K562 (cell line): ENCODE measurements at regions of chr20 and their contacts with region 1.

Region 1: DNA sequence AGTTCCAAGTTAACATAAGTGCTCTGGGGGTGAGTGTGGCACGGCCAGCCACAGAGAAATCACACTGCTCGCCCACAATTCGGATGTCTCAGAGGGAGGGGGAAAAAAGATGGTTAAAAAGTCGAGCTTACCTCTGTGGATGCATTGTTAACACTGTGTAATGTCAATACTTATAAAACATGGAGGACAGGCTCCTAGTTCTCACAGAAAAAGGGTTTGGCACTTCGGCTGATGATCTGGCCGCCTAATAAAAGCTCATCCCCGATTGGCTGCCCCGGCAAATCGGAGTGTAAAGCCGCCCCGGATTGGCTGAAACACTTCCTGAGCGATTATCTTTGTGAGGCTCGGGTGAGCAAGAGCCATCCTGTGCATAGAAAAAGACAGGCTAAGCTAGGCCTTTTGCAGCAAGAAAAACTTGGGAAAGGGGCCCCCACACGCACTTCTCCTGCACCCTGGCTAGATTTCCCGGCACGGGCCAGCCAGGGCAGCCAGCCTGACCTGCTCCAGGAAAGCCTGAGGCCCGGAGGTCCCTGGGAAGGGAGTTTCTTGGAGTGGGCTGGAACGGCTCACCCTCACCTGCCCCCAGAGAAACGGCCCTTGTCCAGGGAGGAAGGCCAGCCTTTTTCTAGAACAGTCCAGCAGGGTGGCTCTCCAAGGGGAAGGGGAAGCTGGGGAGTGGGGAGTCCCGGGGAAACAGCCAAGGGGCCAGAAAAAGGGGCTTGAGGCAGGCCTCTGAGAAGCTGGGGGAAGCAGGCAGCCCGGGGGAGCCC is at the start of gene ZMYND8:
- DNase-seq: peak; percentile 95 to 98 (median 96)
- ATAC-seq: peak; percentile 28
- H3K4me3 ChIP-seq: peak within 1 kb of the TSS; percentile 65
- H3K27ac ChIP-seq: peak within 1 kb of the TSS; percentile 97
- H3K4me1 ChIP-seq: peaks cover 43 to 46% of the 10 kb centered on the region in 2 experiments
- H3K27me3 ChIP-seq: no peaks in the 10 kb centered on the region
- CTCF ChIP-seq: no peak; a peak in 2 of 6 replicates
- EP300 ChIP-seq: peak; percentile 36; the same call in 1 of the 2 replicates
- POLR2A ChIP-seq: peak; percentile 81
- RAD21 ChIP-seq: no peak
- polyA plus RNA-seq, gene ZMYND8: 31.8 to 58.0 TPM

Region 2: DNA sequence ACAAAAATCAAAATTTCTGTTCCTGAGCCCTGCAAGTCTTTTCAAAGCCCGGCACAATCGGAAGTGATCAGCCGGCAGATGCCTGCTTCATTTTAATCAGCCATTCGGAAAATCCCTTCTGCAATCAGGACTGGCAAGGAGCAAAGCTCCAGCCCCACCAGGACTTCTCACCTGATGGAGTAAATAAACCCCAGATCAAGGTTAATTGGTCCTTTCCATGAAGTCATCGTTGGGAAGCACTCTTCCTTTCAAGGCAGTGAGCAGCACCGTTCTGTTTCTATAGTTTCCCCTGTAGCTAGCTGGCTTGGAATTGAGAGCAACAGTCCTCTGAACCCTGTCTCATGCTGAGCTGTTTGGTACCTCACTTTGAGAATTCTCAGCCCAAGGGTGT is 185.8 kb before region 1 on chr20:
- CTCF ChIA-PET with region 1: no interaction called
- POLR2A ChIA-PET with region 1: no interaction called
- in situ Hi-C with region 1: no loop called
- intact Hi-C with region 1: no loop called
- DNase-seq: no peak
- ATAC-seq: no peak
- H3K4me3 ChIP-seq: no peak overlapping the region
- H3K27ac ChIP-seq: no peak overlapping the region
- H3K4me1 ChIP-seq: peaks cover 0 to 9% of the 10 kb centered on the region in 2 experiments; a peak in 1 of 5 replicates
- H3K27me3 ChIP-seq: peaks cover 47 to 72% of the 10 kb centered on the region in 2 experiments; a peak in 4 of 5 replicates
- CTCF ChIP-seq: no peak
- EP300 ChIP-seq: no peak
- POLR2A ChIP-seq: no peak
- RAD21 ChIP-seq: no peak

Region 3: GRCh38 chr20:47317127-47317895 is 39.4 kb before region 1 on chr20:
- CTCF ChIA-PET with region 1: no interaction called
- POLR2A ChIA-PET with region 1: interaction called, 8 read pairs
- in situ Hi-C with region 1: no loop called
- intact Hi-C with region 1: loop called (anchors 5 kb)
- DNase-seq: peak; percentile 75 to 96 (median 82)
- ATAC-seq: peak; percentile 70
- H3K4me3 ChIP-seq: no peak overlapping the region
- H3K27ac ChIP-seq: peak overlapping the region; percentile 89
- H3K4me1 ChIP-seq: peaks cover 60 to 66% of the 10 kb centered on the region in 2 experiments
- H3K27me3 ChIP-seq: no peaks in the 10 kb centered on the region
- CTCF ChIP-seq: no peak
- EP300 ChIP-seq: peak; percentile 83; the same call in 1 of the 2 replicates
- POLR2A ChIP-seq: peak; percentile 56
- RAD21 ChIP-seq: no peak

Region 4: DNA sequence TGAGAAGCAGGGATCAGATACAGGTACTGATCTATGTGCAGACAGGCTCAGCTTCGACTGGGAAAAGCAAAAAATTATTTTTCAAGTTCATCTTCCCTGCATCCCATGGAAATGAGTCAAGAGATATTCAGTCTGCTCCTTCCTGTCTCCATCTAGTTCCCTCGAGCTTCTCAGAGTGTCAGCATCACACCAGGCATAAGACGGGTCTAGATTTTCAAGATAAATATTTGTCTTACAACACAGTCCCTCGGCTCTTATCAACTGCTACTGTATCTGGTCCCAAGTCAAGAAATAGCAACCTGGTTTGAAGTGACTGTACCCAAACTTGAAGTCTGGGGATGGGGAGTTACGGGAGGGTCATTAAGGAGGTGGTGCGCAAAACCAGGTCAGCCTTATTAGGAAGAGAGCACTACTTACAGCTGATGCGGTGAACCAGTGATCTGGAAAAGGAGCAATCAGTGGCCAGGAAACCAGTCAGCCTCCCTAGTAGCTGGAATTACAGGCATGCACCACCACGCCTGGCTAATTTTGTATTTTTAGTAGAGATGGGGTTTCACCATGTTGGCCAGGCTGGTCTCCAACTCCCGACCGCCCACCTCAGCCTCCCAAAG is 29.9 kb before region 1 on chr20:
- CTCF ChIA-PET with region 1: no interaction called
- POLR2A ChIA-PET with region 1: interaction called, 10 read pairs
- in situ Hi-C with region 1: no loop called
- intact Hi-C with region 1: loop called (anchors 2 kb)
- DNase-seq: peak in 1 of 4 experiments; percentile 36
- ATAC-seq: no peak
- H3K4me3 ChIP-seq: no peak overlapping the region
- H3K27ac ChIP-seq: peak overlapping the region; percentile 42; the same call in 2 of the 3 replicates
- H3K4me1 ChIP-seq: peaks cover 52 to 59% of the 10 kb centered on the region in 2 experiments
- H3K27me3 ChIP-seq: no peaks in the 10 kb centered on the region
- CTCF ChIP-seq: no peak
- EP300 ChIP-seq: no peak
- POLR2A ChIP-seq: no peak
- RAD21 ChIP-seq: peak in 1 of 2 experiments; percentile 26; a peak in 2 of 4 replicates

Region 5: DNA sequence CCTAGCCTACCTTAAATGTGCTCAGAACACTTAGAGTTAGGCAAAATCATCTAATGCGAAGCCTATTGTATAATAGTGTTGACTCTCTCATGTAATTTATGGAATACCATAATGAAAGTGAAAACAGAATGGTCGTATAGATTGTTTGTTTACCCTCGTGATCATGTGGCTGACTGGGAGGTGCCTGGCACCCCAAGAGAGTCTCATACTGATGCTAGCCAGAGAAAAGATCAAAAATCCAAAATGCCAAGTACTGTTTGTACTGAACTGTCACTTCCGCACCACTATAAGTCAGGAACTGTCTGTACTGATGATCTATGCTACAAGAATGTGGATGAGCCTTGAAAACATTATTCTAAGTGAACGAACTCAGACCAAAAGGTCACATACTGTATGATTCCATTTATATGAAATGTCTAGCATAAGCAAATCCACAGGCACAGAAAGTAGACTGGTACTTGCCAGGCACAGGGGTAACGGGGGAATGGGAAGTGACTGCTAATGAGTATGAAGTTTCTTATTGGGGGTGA is 22.6 kb before region 1 on chr20:
- CTCF ChIA-PET with region 1: no interaction called
- POLR2A ChIA-PET with region 1: interaction called, 56 read pairs
- in situ Hi-C with region 1: no loop called
- intact Hi-C with region 1: loop called (anchors 2 kb)
- DNase-seq: no peak
- ATAC-seq: no peak
- H3K4me3 ChIP-seq: no peak overlapping the region
- H3K27ac ChIP-seq: peak overlapping the region; percentile 47; the same call in 2 of the 3 replicates
- H3K4me1 ChIP-seq: peaks cover 53 to 73% of the 10 kb centered on the region in 2 experiments
- H3K27me3 ChIP-seq: no peaks in the 10 kb centered on the region
- CTCF ChIP-seq: no peak
- EP300 ChIP-seq: no peak
- POLR2A ChIP-seq: no peak; the same call in 1 of the 2 replicates
- RAD21 ChIP-seq: no peak

Region 6: GRCh38 chr20:47343007-47343472 is 13.7 kb before region 1 on chr20:
- CTCF ChIA-PET with region 1: no interaction called
- POLR2A ChIA-PET with region 1: interaction called, 56 read pairs
- in situ Hi-C with region 1: no loop called
- intact Hi-C with region 1: no loop called
- DNase-seq: no peak
- ATAC-seq: no peak
- H3K4me3 ChIP-seq: no peak overlapping the region
- H3K27ac ChIP-seq: no peak overlapping the region
- H3K4me1 ChIP-seq: peaks cover 42 to 47% of the 10 kb centered on the region in 2 experiments; a peak in 4 of 5 replicates
- H3K27me3 ChIP-seq: no peaks in the 10 kb centered on the region
- CTCF ChIP-seq: no peak
- EP300 ChIP-seq: no peak
- POLR2A ChIP-seq: no peak
- RAD21 ChIP-seq: no peak

Region 7: GRCh38 chr20:47606983-47607613 is 250.4 kb after region 1 on chr20:
- CTCF ChIA-PET with region 1: no interaction called
- POLR2A ChIA-PET with region 1: interaction called, 3 read pairs
- in situ Hi-C with region 1: no loop called
- intact Hi-C with region 1: loop called (anchors 2 kb)
- DNase-seq: peak in 3 of 4 experiments; percentile 13 to 68 (median 66)
- ATAC-seq: peak; percentile 75
- H3K4me3 ChIP-seq: no peak overlapping the region
- H3K27ac ChIP-seq: peak overlapping the region; percentile 86
- H3K4me1 ChIP-seq: peaks cover 6 to 47% of the 10 kb centered on the region in 2 experiments
- H3K27me3 ChIP-seq: no peaks in the 10 kb centered on the region
- CTCF ChIP-seq: no peak
- EP300 ChIP-seq: peak; percentile 96
- POLR2A ChIP-seq: peak; percentile 24; the same call in 1 of the 2 replicates
- RAD21 ChIP-seq: peak in 1 of 2 experiments; percentile 21; a peak in 1 of 4 replicates

Region 8: DNA sequence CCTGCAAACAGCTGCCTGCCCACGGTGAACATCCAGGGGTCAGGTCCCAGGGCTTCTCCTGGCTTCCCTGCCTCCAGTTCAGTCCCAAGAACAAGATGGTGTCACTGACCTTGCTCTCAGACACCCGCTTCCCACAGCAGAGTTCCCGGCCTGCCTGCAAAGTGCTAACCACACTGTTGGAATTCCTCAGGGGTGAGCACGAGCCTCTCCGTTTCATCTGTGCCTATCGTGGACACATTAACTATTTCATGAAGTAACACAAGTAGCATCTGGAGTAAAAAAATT is 518.9 kb after region 1 on chr20:
- CTCF ChIA-PET with region 1: no interaction called
- POLR2A ChIA-PET with region 1: no interaction called
- in situ Hi-C with region 1: no loop called
- intact Hi-C with region 1: no loop called
- DNase-seq: no peak
- ATAC-seq: no peak
- H3K4me3 ChIP-seq: no peak overlapping the region
- H3K27ac ChIP-seq: no peak overlapping the region
- H3K4me1 ChIP-seq: no peaks in the 10 kb centered on the region
- H3K27me3 ChIP-seq: peaks cover 8 to 15% of the 10 kb centered on the region in 2 experiments; a peak in 2 of 5 replicates
- CTCF ChIP-seq: no peak
- EP300 ChIP-seq: no peak
- POLR2A ChIP-seq: no peak
- RAD21 ChIP-seq: no peak